Endothelial cell of umbilical vein (primary cell): ENCODE measurements at regions of chr18 and their contacts with region 1.

Region 1: DNA sequence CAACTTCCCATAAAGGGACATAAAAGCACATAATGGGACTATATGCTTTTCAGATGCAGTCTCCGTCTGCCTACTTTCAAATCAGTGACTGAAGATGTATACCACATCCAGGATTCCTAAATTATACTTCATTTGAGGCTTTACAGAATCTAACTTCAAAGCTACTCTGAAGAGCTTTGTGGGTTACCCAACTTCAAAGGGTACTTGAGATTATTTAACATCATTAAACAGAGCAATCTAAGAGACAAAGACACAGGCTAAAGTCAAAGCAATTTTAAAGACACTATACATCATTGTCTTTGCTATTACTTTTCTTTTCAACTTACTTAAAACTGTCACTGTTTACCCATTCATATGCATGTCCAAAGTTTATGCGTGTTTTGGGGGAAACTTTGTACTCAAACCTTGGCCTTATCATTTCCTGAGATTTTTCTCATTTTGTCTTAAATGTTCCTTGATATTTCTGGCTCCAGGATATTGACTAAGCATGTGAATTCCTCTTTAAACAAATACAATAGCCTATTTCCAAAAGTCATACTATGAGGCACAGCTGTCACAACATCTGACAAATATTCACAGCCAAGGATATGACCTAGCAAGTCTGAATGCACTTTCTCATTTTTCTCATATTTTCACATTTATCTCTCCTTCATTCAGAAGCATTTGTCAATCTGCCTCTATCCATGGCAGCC is 1985.1 kb upstream of the PIK3C3 start:
- DNase-seq: peak; percentile 97
- H3K4me3 ChIP-seq: peak overlapping the region in 1 of 3 experiments; percentile 78
- H3K27ac ChIP-seq: peak overlapping the region; percentile 98
- H3K4me1 ChIP-seq: peaks cover 30% of the 10 kb centered on the region
- H3K27me3 ChIP-seq: no peaks in the 10 kb centered on the region
- CTCF ChIP-seq: no peak
- POLR2A ChIP-seq: peak; percentile 69

Region 2: DNA sequence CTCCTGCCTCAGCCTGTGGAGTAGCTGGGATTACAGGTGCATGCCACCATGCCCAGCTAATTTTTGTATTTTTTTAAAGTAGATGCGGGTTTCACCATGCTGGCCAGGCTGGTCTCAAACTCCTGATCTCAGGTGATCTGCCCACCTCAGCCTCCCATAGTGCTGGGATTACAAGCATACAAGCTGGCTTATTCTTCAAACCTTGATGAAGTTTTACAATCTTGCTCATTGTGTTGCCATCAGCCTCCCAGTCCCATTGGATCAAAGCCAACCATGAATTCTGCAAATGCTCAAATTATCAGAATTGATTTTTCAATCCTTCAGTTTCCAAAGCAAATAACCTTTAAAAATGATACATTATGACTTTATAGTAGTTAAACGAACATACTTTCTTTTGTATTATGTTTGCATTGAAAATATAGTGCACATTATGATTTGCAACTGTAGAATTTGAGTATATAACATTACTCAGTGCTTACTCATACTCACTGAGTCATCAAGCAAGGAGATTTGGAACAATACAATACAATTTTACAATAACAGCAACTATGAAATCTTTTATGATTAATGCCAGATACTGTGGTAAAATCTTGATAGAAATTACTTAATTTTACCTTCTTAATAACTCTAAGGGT is 912.4 kb before region 1 on chr18:
- CTCF ChIA-PET with region 1: no interaction called
- POLR2A ChIA-PET with region 1: no interaction called
- dilution Hi-C with region 1: no loop called
- intact Hi-C with region 1: loop called (anchors 5 kb)
- DNase-seq: peak; percentile 81
- H3K4me3 ChIP-seq: no peak overlapping the region
- H3K27ac ChIP-seq: peak overlapping the region; percentile 88
- H3K4me1 ChIP-seq: peaks cover 27% of the 10 kb centered on the region
- H3K27me3 ChIP-seq: peaks cover 3 to 7% of the 10 kb centered on the region in 2 experiments
- CTCF ChIP-seq: no peak
- POLR2A ChIP-seq: no peak

Region 3: GRCh38 chr18:39453882-39454281 is 516.1 kb before region 1 on chr18:
- CTCF ChIA-PET with region 1: no interaction called
- POLR2A ChIA-PET with region 1: no interaction called
- dilution Hi-C with region 1: no loop called
- intact Hi-C with region 1: loop called (anchors 2 kb)
- DNase-seq: peak; percentile 99
- H3K4me3 ChIP-seq: peak overlapping the region in 1 of 3 experiments; percentile 55
- H3K27ac ChIP-seq: peak overlapping the region; percentile 89
- H3K4me1 ChIP-seq: peaks cover 46% of the 10 kb centered on the region
- H3K27me3 ChIP-seq: no peaks in the 10 kb centered on the region
- CTCF ChIP-seq: no peak
- POLR2A ChIP-seq: no peak

Region 4: DNA sequence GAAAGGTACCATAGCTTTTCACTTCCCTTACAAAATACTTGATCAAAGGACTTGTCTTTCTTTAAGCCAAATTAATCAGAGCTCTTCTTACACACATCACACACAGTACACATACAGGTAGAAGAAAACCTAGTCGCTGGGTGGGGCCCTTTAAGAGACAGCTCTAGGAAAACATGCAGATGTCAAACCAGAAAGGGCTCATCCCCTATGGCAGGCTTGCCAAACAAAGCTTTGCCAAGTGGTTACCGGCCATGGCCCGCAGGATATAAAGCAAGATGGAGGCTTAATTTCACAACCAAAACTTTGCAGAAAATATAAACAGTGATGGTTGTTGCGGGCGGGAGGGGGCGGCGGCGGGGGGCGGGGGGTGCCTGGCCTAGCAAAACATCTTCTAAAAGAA is 170.9 kb before region 1 on chr18:
- CTCF ChIA-PET with region 1: no interaction called
- POLR2A ChIA-PET with region 1: no interaction called
- dilution Hi-C with region 1: no loop called
- intact Hi-C with region 1: loop called (anchors 2 kb)
- DNase-seq: peak; percentile 14
- H3K4me3 ChIP-seq: peak overlapping the region in 2 of 3 experiments; percentile 58 to 90
- H3K27ac ChIP-seq: no peak overlapping the region
- H3K4me1 ChIP-seq: peaks cover 6% of the 10 kb centered on the region
- H3K27me3 ChIP-seq: no peaks in the 10 kb centered on the region
- CTCF ChIP-seq: no peak
- POLR2A ChIP-seq: no peak

Region 5: GRCh38 chr18:39946623-39947061 is 23.3 kb before region 1 on chr18:
- CTCF ChIA-PET with region 1: interaction called, 3 read pairs
- POLR2A ChIA-PET with region 1: no interaction called
- dilution Hi-C with region 1: no loop called
- intact Hi-C with region 1: loop called (anchors 2 kb)
- DNase-seq: peak; percentile 64
- H3K4me3 ChIP-seq: no peak overlapping the region
- H3K27ac ChIP-seq: peak overlapping the region; percentile 38
- H3K4me1 ChIP-seq: peaks cover 17% of the 10 kb centered on the region
- H3K27me3 ChIP-seq: no peaks in the 10 kb centered on the region
- CTCF ChIP-seq: no peak
- POLR2A ChIP-seq: no peak

Region 6: DNA sequence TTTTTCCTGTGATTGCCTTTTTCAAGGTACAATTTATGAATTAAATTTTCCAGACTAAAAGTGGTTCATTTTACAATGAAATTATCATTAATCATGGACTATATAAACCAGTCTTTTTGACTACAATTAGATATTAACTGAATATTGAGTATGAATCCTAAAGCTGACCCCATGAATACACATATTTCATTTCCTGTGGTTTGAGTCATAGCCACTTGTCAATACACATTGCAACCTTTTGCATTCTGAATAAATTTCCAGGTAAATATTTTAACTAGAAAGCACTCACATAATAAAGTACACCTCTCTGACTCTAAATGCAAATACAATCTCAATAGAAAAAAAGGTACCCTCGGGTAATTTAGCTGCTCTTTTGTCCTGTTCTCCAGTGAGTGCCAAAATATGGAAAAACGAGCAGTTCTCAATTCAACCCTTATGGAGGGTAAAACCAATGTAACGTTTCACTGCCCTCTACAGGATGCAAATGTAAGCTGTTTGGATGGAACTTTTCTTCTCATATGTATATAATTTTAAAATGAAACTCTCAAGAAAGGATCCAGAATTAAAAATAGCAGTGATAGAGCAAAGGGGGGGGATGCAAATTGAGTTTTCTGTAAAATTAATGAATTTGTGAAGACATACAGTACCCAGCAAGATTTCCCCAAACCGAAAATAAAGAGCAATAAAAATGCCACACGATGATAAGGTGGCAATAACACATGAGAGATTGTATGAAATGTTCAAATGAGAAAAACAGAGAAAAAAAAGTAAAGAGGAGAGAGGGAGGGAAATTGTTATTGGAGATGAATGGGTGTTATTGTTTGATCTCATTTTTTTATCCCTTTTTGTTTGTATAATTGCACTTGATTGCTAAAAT is 189.4 kb after region 1 on chr18:
- CTCF ChIA-PET with region 1: no interaction called
- POLR2A ChIA-PET with region 1: no interaction called
- dilution Hi-C with region 1: no loop called
- intact Hi-C with region 1: loop called (anchors 2 kb)
- DNase-seq: peak; percentile 63
- H3K4me3 ChIP-seq: no peak overlapping the region
- H3K27ac ChIP-seq: no peak overlapping the region
- H3K4me1 ChIP-seq: peaks cover 6% of the 10 kb centered on the region
- H3K27me3 ChIP-seq: no peaks in the 10 kb centered on the region
- CTCF ChIP-seq: peak; percentile 44 to 63
- POLR2A ChIP-seq: no peak

Region 7: GRCh38 chr18:40365526-40365925 is 395.6 kb after region 1 on chr18:
- CTCF ChIA-PET with region 1: no interaction called
- POLR2A ChIA-PET with region 1: no interaction called
- dilution Hi-C with region 1: no loop called
- intact Hi-C with region 1: loop called (anchors 2 kb)
- DNase-seq: no peak
- H3K4me3 ChIP-seq: no peak overlapping the region
- H3K27ac ChIP-seq: peak overlapping the region; percentile 52
- H3K4me1 ChIP-seq: peaks cover 36% of the 10 kb centered on the region
- H3K27me3 ChIP-seq: no peaks in the 10 kb centered on the region
- CTCF ChIP-seq: no peak
- POLR2A ChIP-seq: no peak